ENCODE measurements at regions of chr2 and their contacts with region 1.

Region 1: DNA sequence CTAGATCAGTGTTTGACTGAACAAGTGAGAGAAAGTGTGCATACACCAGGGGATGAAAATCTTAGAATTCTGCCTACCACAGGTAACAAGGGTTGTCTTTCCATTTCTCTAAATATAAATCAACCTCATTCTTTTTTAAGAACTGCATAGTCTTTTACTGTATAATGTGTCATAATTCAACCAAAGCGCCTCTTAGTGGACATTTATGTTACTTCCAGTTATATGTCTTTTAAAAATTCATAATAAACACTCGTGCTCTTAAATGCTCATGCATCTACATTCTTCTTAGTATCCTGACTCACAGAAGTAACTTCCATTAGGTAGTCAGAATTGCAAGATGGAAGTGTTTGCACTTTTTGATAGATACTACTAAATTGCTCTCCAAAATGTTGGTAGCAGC is 76.2 kb downstream of the CHRNA1 start:
- DNase-seq: peak in 2 of 9 experiments; percentile 58 to 70
- ATAC-seq: peak; percentile 67
- H3K4me3 ChIP-seq: no peak overlapping the region
- H3K4me3 Mint-ChIP-seq: no peak overlapping the region
- H3K27ac ChIP-seq: no peak overlapping the region
- H3K27ac Mint-ChIP-seq: peak overlapping the region; percentile 68
- H3K4me1 ChIP-seq: peaks cover 11% of the 10 kb centered on the region
- H3K4me1 Mint-ChIP-seq: peaks cover 24% of the 10 kb centered on the region
- H3K27me3 ChIP-seq: no peaks in the 10 kb centered on the region
- H3K27me3 Mint-ChIP-seq: no peaks in the 10 kb centered on the region
- CTCF ChIP-seq: peak; percentile 73

Region 2: GRCh38 chr2:174577967-174578589 is 110.0 kb before region 1 on chr2:
- CTCF ChIA-PET with region 1: interaction called, 189 read pairs
- POLR2A ChIA-PET with region 1: interaction called, 3 read pairs
- intact Hi-C with region 1: loop called (anchors 1 kb)
- DNase-seq: peak in 6 of 9 experiments; percentile 33 to 87 (median 67)
- ATAC-seq: peak; percentile 84
- H3K4me3 ChIP-seq: no peak overlapping the region
- H3K4me3 Mint-ChIP-seq: no peak overlapping the region
- H3K27ac ChIP-seq: peak overlapping the region in 1 of 2 experiments; percentile 5
- H3K27ac Mint-ChIP-seq: peak overlapping the region; percentile 83
- H3K4me1 ChIP-seq: peaks cover 65% of the 10 kb centered on the region
- H3K4me1 Mint-ChIP-seq: peaks cover 80% of the 10 kb centered on the region
- H3K27me3 ChIP-seq: no peaks in the 10 kb centered on the region
- H3K27me3 Mint-ChIP-seq: no peaks in the 10 kb centered on the region
- CTCF ChIP-seq: peak; percentile 83

Region 3: DNA sequence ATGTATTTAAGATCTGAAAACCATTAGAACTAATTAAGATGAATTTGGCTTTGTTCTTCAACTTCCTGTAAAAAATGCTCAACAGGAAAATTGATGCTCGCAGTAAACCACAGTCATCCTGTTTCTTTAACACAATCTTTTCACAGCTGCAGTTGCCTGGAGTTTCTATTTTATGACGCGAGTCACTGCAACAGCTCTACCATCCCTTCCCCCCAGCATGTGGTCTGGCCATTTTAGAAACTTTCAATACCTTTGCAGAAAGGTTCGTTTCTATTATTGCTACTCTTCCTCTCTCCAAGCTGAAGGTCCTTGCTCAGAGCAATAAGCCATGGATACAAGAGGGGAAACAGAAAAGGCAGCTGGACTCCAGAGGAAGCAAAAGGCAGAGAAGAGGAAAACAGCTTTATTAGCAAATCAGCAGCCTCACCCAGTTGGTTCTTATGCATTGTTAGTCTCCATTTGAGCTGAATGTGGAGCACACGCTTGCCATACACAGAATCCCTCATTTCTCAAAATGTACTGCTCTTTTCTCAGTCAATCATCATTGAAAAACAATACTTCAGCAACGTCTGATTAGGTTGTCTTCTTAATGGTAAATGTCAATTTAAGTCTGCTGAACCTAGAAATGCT is 94.4 kb before region 1 on chr2:
- CTCF ChIA-PET with region 1: interaction called, 60 read pairs
- POLR2A ChIA-PET with region 1: interaction called, 8 read pairs
- intact Hi-C with region 1: loop called in 1 of 2 experiments (anchors 5 kb)
- DNase-seq: peak; percentile 34 to 95 (median 71)
- ATAC-seq: peak; percentile 67
- H3K4me3 ChIP-seq: peak overlapping the region; percentile 40 to 74
- H3K4me3 Mint-ChIP-seq: peak overlapping the region; percentile 87
- H3K27ac ChIP-seq: peak overlapping the region; percentile 65 to 91
- H3K27ac Mint-ChIP-seq: peak overlapping the region; percentile 99
- H3K4me1 ChIP-seq: peaks cover 46% of the 10 kb centered on the region
- H3K4me1 Mint-ChIP-seq: peaks cover 61% of the 10 kb centered on the region
- H3K27me3 ChIP-seq: no peaks in the 10 kb centered on the region
- H3K27me3 Mint-ChIP-seq: no peaks in the 10 kb centered on the region
- CTCF ChIP-seq: no peak

Region 4: DNA sequence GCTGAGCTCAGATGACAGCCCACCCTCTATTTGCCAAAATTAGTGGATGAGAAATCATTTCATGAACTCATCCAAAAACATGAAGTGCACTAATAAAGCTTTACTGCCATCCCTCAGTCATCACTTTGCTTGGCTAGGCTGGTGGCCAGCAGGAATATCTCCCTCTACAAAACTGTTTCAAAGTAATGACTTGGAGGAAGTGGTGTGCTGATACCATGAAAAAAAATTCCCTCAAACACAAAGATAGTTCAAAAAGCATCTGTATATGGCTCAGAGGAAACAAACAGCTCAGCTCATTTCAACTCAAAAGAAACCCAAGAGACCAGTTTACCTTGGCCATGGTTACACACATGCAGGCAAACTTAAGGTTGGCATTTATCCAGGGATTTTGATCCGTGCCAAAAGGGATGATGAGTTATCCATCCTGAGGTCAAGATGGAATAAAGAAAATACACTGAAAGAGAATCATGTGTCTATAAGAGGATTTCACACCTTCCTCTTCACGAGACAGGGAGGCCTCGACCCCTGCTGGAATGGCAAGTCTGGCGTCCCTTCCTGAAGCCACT is 72.1 kb before region 1 on chr2:
- CTCF ChIA-PET with region 1: interaction called, 86 read pairs
- POLR2A ChIA-PET with region 1: interaction called, 10 read pairs
- intact Hi-C with region 1: no loop called
- DNase-seq: peak in 1 of 9 experiments; percentile 52
- ATAC-seq: peak; percentile 69
- H3K4me3 ChIP-seq: no peak overlapping the region
- H3K4me3 Mint-ChIP-seq: peak overlapping the region; percentile 12
- H3K27ac ChIP-seq: peak overlapping the region in 1 of 2 experiments; percentile 60
- H3K27ac Mint-ChIP-seq: peak overlapping the region; percentile 58
- H3K4me1 ChIP-seq: peaks cover 62% of the 10 kb centered on the region
- H3K4me1 Mint-ChIP-seq: peaks cover 83% of the 10 kb centered on the region
- H3K27me3 ChIP-seq: no peaks in the 10 kb centered on the region
- H3K27me3 Mint-ChIP-seq: no peaks in the 10 kb centered on the region
- CTCF ChIP-seq: no peak

Region 5: GRCh38 chr2:174634130-174635014 is 53.7 kb before region 1 on chr2:
- CTCF ChIA-PET with region 1: interaction called, 35 read pairs
- POLR2A ChIA-PET with region 1: interaction called, 5 read pairs
- intact Hi-C with region 1: loop called (anchors 1 to 2 kb)
- DNase-seq: peak in 8 of 9 experiments; percentile 14 to 83 (median 51)
- ATAC-seq: peak; percentile 74
- H3K4me3 ChIP-seq: peak overlapping the region; percentile 70 to 71
- H3K4me3 Mint-ChIP-seq: peak overlapping the region; percentile 95
- H3K27ac ChIP-seq: peak overlapping the region; percentile 49 to 90
- H3K27ac Mint-ChIP-seq: peak overlapping the region; percentile 98
- H3K4me1 ChIP-seq: peaks cover 46% of the 10 kb centered on the region
- H3K4me1 Mint-ChIP-seq: peaks cover 71% of the 10 kb centered on the region
- H3K27me3 ChIP-seq: no peaks in the 10 kb centered on the region
- H3K27me3 Mint-ChIP-seq: no peaks in the 10 kb centered on the region
- CTCF ChIP-seq: no peak

Measured in CD8-positive, alpha-beta T cell (primary cell).